Sigmoid colon (tissue), 7 donors: ENCODE measurements at regions of chr12 and their contacts with region 1.

Region 1: DNA sequence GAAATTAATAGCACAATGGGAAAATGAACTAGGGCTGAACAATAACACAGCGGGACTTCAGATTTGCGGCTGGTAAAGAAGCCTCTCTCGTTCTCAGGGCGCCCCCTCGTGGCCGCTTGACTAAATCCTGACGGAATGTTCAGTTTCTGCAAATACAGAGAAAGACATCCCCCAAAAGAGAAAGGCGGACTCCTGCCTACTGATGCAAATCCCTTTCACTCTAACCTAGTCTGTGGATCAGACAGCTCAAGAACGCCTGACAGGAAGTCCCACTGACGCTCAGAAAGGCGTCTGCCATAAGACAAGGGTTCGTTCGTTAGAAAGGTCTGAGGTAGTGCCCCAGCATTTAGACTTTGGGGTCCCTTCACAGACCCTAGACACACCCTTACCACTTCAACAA is 2.5 kb downstream of the NUAK1 start:
- DNase-seq: peak; percentile 93
- H3K4me3 ChIP-seq: peak overlapping the region in 3 of 4 donors; percentile 13 to 77 (median 70)
- H3K27ac ChIP-seq: peak overlapping the region; percentile 14 to 90 (median 74)
- H3K4me1 ChIP-seq: peaks cover 0 to 76% (median 36%) of the 10 kb centered on the region in 4 donors
- H3K27me3 ChIP-seq: no peaks in the 10 kb centered on the region
- CTCF ChIP-seq: peak; percentile 71 to 82 (median 80)
- EP300 ChIP-seq: no peak
- POLR2A ChIP-seq: no peak

Region 2: DNA sequence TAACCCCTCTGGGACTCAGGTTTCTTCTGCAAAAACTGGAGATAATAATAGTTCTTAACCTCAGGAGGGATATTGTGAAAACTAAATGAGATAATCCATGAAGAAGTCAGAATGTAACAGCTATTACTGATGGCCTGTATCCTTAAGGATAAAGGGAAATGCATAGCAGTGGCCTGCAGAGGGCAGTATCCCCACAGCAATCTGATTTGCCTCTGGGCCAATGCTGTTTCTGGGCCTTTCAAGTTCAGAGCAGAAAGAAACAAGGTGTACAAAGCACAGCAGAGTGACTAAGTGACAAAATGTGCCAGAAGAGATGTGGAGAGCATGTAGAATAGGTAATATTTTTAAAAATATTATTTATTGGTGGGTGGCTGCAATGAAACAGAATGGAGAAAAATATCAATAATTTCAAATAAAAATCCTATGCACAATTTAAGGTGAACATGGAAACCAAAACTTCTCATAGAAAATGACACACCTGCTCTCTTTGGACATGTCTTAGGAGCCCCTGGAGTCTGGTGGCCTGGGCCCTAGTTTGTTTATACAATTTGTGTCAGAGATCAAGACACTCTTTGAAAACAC is 715.5 kb before region 1 on chr12:
- intact Hi-C with region 1: loop called (anchors 2 kb)
- DNase-seq: peak; percentile 83
- H3K4me3 ChIP-seq: no peak overlapping the region
- H3K27ac ChIP-seq: no peak overlapping the region
- H3K4me1 ChIP-seq: peaks cover 0 to 13% (median 6%) of the 10 kb centered on the region in 4 donors
- H3K27me3 ChIP-seq: no peaks in the 10 kb centered on the region
- CTCF ChIP-seq: peak; percentile 85 to 93 (median 88)
- EP300 ChIP-seq: no peak
- POLR2A ChIP-seq: no peak

Region 3: DNA sequence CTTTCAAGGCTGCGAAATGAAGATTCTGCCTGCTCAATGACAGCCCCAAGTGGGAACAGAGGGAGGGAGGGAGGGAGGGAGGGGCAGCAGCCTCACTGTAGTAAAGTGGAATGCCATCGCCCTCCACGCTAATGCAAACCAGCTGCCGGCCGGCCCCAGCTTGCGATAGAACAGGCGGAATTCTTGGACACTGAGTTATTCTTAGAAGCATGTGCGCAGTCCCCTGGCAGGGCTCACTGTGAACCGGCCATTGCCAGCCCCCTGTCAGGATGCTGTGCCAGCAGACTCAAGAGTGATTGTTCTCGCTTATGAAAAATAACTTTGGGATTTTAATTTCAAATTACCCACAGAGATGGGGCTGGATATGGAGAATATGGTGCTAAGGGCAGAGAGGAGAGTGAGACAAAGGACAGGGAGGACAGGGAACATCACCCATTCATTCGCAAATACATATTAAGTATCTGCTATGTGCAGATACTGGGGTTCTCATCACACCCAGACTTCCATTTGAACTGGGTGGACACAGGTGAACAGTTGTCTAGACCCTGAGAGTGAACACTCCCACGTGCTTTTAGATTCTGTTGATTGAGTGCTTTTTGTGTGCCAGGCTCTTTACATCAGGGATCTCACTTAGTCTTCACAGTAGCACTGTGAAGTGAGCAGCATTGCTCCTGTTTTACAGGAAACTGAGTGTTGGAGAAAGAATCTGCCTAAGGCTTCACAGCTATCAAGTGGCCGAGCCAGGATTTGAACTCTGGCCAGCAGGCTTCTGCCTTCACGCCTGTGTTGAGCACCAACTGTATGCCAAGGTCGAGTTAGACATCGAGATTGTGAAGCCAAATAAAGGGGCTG is 612.9 kb before region 1 on chr12:
- intact Hi-C with region 1: loop called (anchors 2 kb)
- DNase-seq: peak; percentile 91
- H3K4me3 ChIP-seq: no peak overlapping the region
- H3K27ac ChIP-seq: peak overlapping the region in 2 of 4 donors; percentile 60 to 71
- H3K4me1 ChIP-seq: peaks cover 0 to 18% (median 17%) of the 10 kb centered on the region in 4 donors
- H3K27me3 ChIP-seq: no peaks in the 10 kb centered on the region
- CTCF ChIP-seq: no peak
- EP300 ChIP-seq: peak in 3 of 4 donors; percentile 67 to 84 (median 84)
- POLR2A ChIP-seq: no peak

Region 4: DNA sequence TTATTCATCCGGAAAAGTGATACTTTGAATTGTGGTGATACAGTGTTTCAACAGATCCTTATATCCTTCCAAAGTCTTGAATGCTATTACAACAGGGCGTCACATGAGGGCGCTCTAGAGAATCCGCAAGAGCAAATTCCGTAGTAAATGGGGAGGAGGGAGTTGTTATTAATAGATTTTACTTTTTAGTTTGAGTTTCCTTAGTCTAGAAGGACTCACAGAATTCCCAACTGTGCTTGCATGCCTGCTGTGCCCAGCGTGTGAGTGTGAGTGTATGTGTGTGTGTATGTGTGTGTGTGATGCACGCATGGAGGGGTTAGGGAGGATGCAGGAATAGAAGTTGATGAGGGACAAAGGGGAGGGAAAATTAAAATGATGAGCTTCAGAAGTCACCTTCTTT is 430.5 kb before region 1 on chr12:
- intact Hi-C with region 1: loop called (anchors 2 kb)
- DNase-seq: peak; percentile 69
- H3K4me3 ChIP-seq: no peak overlapping the region
- H3K27ac ChIP-seq: no peak overlapping the region
- H3K4me1 ChIP-seq: no peaks in the 10 kb centered on the region
- H3K27me3 ChIP-seq: no peaks in the 10 kb centered on the region
- CTCF ChIP-seq: peak; percentile 24 to 62 (median 50)
- EP300 ChIP-seq: no peak
- POLR2A ChIP-seq: no peak

Region 5: DNA sequence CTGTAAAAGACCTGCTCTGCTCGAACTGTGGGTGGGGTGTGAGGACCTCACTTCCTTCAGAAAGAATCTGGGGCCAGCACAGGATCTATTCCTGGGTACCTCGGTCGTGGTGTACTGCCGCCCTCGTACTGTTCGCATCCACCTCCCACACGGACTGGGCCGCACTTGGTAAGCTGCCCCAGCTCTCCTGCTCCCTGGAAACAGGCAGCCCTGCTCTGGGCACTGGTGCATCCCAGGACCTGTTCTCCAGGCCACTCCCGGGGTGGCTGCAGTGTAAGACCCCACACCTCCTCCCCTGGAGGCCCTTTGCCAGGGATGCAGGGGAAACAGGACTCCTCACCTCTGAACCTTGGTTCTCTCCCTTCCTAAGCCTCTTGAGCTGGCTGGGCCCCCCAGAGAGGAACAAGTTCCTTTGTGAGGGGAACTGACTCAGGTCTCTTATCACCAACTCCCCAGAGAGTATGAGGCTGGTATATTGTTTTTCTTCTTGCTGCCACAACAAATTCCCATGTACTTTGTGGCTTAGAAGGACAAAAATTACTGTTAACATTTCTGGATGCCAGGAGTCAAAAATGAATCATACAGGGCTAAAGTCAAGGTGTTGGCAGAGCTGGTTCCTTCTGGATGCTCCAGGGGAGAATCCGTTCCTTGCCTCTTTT is 274.0 kb before region 1 on chr12:
- intact Hi-C with region 1: no loop called
- DNase-seq: no peak
- H3K4me3 ChIP-seq: no peak overlapping the region
- H3K27ac ChIP-seq: no peak overlapping the region
- H3K4me1 ChIP-seq: no peaks in the 10 kb centered on the region
- H3K27me3 ChIP-seq: no peaks in the 10 kb centered on the region
- CTCF ChIP-seq: no peak
- EP300 ChIP-seq: no peak
- POLR2A ChIP-seq: no peak

Region 6: GRCh38 chr12:105922670-105923102 is 213.6 kb before region 1 on chr12:
- intact Hi-C with region 1: loop called (anchors 5 kb)
- DNase-seq: no peak
- H3K4me3 ChIP-seq: no peak overlapping the region
- H3K27ac ChIP-seq: peak overlapping the region in 3 of 4 donors; percentile 44 to 73 (median 46)
- H3K4me1 ChIP-seq: peaks cover 0 to 30% (median 21%) of the 10 kb centered on the region in 4 donors
- H3K27me3 ChIP-seq: no peaks in the 10 kb centered on the region
- CTCF ChIP-seq: no peak
- EP300 ChIP-seq: no peak
- POLR2A ChIP-seq: no peak

Region 7: GRCh38 chr12:106302401-106303201 is 166.3 kb after region 1 on chr12 and contains the start of gene TCP11L2:
- intact Hi-C with region 1: loop called (anchors 5 kb)
- DNase-seq: peak; percentile 93
- H3K4me3 ChIP-seq: peak within 1 kb of the TSS; percentile 60 to 98 (median 92)
- H3K27ac ChIP-seq: peak within 1 kb of the TSS; percentile 83 to 98 (median 95)
- H3K4me1 ChIP-seq: peaks cover 0 to 54% (median 51%) of the 10 kb centered on the region in 4 donors
- H3K27me3 ChIP-seq: no peaks in the 10 kb centered on the region
- CTCF ChIP-seq: no peak
- EP300 ChIP-seq: no peak
- POLR2A ChIP-seq: peak in 1 of 2 donors; percentile 25
- total RNA-seq, gene TCP11L2: 38.4 to 53.5 (median 49.3) TPM